ENCODE measurements at regions of chr15 and their contacts with region 1.

Region 1: DNA sequence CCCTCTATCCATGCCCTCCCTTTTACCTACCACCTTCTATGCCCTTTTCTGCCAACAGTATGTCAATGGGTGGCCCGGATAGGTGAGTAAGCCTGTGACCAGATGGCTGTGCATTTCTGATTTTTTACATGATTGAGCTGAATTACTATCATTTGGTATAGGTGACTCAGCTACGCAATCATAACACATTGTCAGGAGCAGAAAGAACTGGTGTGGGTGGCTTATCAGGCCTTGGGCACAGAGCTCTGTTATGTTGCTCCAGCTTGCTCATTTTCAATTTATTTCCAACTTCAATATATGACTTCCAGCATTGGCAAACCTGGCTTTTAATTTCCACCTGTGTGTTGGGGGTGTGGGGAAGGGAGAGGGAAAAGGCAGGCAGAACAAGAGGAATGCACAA is 86.6 kb upstream of the AGBL1 start:
- DNase-seq: no peak
- ATAC-seq: peak in 1 of 4 donors; percentile 38
- H3K4me3 ChIP-seq: no peak overlapping the region
- H3K27ac ChIP-seq: no peak overlapping the region
- H3K4me1 ChIP-seq: no peaks in the 10 kb centered on the region
- H3K27me3 ChIP-seq: no peaks in the 10 kb centered on the region
- CTCF ChIP-seq: no peak

Region 2: GRCh38 chr15:86055688-86056087 is 62.6 kb after region 1 on chr15:
- intact Hi-C with region 1: loop called in 1 of 3 experiments (anchors 10 kb)
- DNase-seq: no peak
- ATAC-seq: no peak
- H3K4me3 ChIP-seq: no peak overlapping the region
- H3K27ac ChIP-seq: no peak overlapping the region
- H3K4me1 ChIP-seq: no peaks in the 10 kb centered on the region
- H3K27me3 ChIP-seq: no peaks in the 10 kb centered on the region
- CTCF ChIP-seq: no peak

Measured in pancreas (tissue), 10 donors.